Panc1 (cell line): ENCODE measurements at regions of chr2 and their contacts with region 1.

Region 1: DNA sequence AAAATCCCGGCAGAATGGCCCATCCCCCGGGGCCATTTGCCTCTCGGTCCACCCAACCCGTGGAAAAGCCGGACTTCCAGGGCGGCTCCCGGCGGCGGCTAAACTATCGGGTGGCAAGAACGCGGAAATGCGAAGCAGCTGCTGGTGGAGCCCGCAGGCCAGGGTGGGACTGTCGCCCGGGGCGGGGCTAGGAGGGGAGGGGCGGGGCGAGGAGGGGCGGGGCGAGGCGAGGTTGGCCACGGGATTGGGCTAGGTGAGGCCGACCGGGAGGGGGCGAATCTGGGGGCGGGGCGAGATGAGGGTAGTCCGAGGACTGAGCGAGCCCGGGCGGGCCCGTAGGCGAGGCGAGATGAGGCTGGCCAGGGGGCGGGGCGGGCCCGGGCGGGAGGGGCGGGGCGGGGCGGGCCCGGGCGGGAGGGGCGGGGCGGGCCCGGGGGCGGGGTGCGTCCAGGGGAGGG is 315 bp upstream of the SLC66A3 start:
- DNase-seq: peak; percentile 65
- ATAC-seq: peak; percentile 92
- H3K4me3 ChIP-seq: peak overlapping the region; percentile 63 to 75
- H3K27ac ChIP-seq: peak overlapping the region; percentile 91
- H3K4me1 ChIP-seq: peaks cover 9% of the 10 kb centered on the region
- H3K27me3 ChIP-seq: no peaks in the 10 kb centered on the region
- CTCF ChIP-seq: no peak

Region 2: DNA sequence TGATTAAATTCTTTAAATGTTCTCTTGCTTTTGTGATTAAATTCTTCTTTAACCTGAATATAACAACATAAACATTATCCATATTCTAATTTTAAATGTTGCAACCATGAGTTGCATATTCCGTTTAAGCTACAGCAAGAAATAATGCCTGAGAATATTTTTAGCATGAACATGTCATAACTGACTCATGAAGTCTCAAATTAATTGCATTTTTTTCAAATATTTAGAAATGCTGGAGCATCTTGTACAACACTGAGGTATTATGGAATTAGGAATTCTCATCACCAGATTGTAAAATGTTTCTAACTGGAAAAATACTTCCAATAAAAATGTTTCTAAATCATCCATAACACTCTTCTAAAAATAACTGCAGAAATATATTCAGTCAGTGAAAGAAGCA is 174.8 kb after region 1 on chr2:
- CTCF ChIA-PET with region 1: no interaction called
- POLR2A ChIA-PET with region 1: no interaction called
- in situ Hi-C with region 1: no loop called
- intact Hi-C with region 1: no loop called
- DNase-seq: no peak
- ATAC-seq: no peak
- H3K4me3 ChIP-seq: no peak overlapping the region
- H3K27ac ChIP-seq: no peak overlapping the region
- H3K4me1 ChIP-seq: peaks cover 5% of the 10 kb centered on the region; the same call in 1 of the 2 replicates
- H3K27me3 ChIP-seq: no peaks in the 10 kb centered on the region
- CTCF ChIP-seq: no peak

Region 3: GRCh38 chr2:11398747-11399437 is 243.9 kb after region 1 on chr2:
- CTCF ChIA-PET with region 1: no interaction called
- POLR2A ChIA-PET with region 1: no interaction called
- in situ Hi-C with region 1: no loop called
- intact Hi-C with region 1: no loop called
- DNase-seq: no peak
- ATAC-seq: no peak
- H3K4me3 ChIP-seq: no peak overlapping the region
- H3K27ac ChIP-seq: no peak overlapping the region
- H3K4me1 ChIP-seq: no peaks in the 10 kb centered on the region
- H3K27me3 ChIP-seq: no peaks in the 10 kb centered on the region
- CTCF ChIP-seq: no peak

Region 4: GRCh38 chr2:11669454-11670291 is 514.7 kb after region 1 on chr2 and contains the start of gene NTSR2:
- CTCF ChIA-PET with region 1: no interaction called
- POLR2A ChIA-PET with region 1: interaction called, 15 read pairs
- in situ Hi-C with region 1: no loop called
- intact Hi-C with region 1: no loop called
- DNase-seq: no peak
- ATAC-seq: peak; percentile 88
- H3K4me3 ChIP-seq: peak within 1 kb of the TSS; percentile 9 to 37; a peak in 2 of 4 replicates
- H3K27ac ChIP-seq: no peak within 1 kb of the TSS
- H3K4me1 ChIP-seq: no peaks in the 10 kb centered on the region
- H3K27me3 ChIP-seq: peaks cover 7% of the 10 kb centered on the region; the same call in 1 of the 2 replicates
- CTCF ChIP-seq: no peak
- total RNA-seq, gene NTSR2: 0.15 TPM

Region 5: DNA sequence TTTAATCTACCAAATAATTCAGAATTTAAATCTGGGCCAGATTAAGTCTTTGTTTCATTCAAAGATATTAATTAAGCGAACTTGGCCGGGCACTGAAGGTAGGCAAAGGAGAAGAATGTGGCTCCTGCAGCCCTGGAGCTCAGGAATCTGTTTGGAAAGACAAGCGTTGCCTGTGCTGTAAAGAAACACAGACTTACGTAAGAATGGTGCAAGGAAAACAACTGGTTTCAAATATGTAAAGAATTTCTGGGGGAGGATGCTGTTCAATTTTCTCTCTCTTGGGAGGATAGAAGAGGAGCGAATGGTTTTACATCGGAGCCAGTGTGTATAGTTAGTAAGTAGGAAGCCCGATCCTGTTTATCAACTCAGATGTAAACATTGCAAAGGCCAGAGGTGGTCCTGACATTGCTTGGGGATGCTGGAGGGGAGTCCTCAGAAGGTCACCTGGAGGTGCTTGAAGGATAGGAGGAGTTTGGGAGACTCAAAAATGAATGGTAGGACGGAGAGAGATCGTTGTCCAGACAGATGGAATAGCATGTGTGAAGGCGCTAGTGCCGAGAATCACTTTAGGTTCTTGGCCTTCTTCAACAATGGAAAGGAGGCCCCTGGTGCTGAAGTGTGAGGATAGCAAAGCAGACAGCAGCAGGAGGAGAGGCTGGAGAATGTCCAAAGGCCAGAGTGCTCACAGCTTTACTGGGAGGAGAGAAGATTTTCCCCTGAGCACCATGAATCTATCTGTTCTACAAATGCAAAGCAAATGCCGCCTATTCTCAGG is 1047.5 kb after region 1 on chr2:
- CTCF ChIA-PET with region 1: no interaction called
- POLR2A ChIA-PET with region 1: no interaction called
- in situ Hi-C with region 1: no loop called
- intact Hi-C with region 1: no loop called
- DNase-seq: no peak
- ATAC-seq: no peak
- H3K4me3 ChIP-seq: no peak overlapping the region
- H3K27ac ChIP-seq: peak overlapping the region; percentile 3; the same call in 1 of the 2 replicates
- H3K4me1 ChIP-seq: no peaks in the 10 kb centered on the region
- H3K27me3 ChIP-seq: no peaks in the 10 kb centered on the region
- CTCF ChIP-seq: no peak